GM12878 (cell line): ENCODE measurements at regions of chr1 and their contacts with region 1.

Region 1: DNA sequence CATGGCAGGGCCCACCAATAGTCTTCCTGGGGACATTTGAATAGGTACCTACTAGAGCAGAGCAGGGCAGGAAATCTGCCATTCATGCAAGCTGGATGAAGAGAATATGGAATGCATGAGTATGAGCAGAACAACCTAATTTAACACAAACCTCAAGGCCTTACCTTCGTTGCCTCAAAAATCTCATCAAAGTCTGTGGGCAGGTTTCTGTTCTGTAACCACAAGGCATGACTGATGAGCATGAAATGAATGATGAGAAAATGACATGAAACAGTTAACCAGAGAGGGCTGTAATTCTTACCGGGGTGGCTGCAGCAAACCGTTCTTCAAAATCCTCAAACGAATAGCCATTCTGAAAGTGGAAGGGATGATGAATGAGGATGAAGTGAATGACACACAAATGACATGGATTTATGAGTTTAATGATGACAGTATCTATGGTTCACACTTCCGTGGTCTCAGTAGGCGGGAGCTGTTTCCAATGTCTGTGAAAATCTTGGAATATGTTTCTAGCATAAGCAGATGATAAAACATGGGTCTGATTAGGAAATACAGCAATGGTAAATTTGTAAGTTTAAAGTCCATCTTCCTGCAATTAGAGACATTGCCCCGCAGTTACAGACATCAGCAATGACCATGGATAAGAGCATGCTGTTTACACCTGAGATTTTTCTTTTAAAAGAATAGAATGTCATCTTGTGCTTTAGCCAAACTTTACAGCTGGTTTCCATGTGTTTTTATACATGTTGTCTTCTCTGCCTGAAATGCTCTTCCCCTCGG is 67.6 kb upstream of the C8B start:
- DNase-seq: no peak
- ATAC-seq: peak; percentile 74
- H3K4me3 ChIP-seq: no peak overlapping the region
- H3K27ac ChIP-seq: no peak overlapping the region
- H3K4me1 ChIP-seq: no peaks in the 10 kb centered on the region
- H3K27me3 ChIP-seq: no peaks in the 10 kb centered on the region; a peak in 1 of 4 replicates
- CTCF ChIP-seq: no peak
- EP300 ChIP-seq: no peak
- POLR2A ChIP-seq: no peak
- RAD21 ChIP-seq: no peak

Region 2: GRCh38 chr1:56979986-56980755 is 53.2 kb before region 1 on chr1:
- CTCF ChIA-PET with region 1: no interaction called
- POLR2A ChIA-PET with region 1: no interaction called
- RAD21 ChIA-PET with region 1: no interaction called
- SMC1A ChIA-PET with region 1: interaction called, 3 read pairs
- in situ Hi-C with region 1: no loop called
- intact Hi-C with region 1: loop called (anchors 5 kb)
- DNase-seq: no peak
- ATAC-seq: no peak
- H3K4me3 ChIP-seq: no peak overlapping the region
- H3K27ac ChIP-seq: no peak overlapping the region
- H3K4me1 ChIP-seq: no peaks in the 10 kb centered on the region
- H3K27me3 ChIP-seq: peaks cover 0 to 3% of the 10 kb centered on the region in 2 experiments; a peak in 2 of 4 replicates
- CTCF ChIP-seq: no peak
- EP300 ChIP-seq: no peak
- POLR2A ChIP-seq: no peak
- RAD21 ChIP-seq: no peak

Region 3: DNA sequence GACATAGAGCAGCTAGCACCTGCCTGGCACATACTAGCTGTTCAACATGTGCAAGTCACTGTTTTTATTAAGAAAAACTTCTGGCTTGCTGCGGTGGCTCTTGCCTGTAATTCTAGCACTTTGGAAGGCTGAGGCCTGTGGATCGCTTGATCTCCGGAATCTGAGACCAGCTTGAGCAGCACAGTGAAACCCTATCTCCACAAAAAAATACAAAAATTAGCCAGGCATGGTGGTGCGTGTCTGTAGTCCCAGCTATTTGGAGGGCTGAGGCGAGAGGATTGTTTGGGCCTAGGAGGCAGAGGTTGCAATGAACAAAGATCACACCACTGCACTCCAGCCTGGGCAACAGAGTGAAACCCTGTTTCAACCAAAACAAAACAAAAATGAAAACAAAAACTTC is 39.9 kb before region 1 on chr1:
- CTCF ChIA-PET with region 1: no interaction called
- POLR2A ChIA-PET with region 1: no interaction called
- RAD21 ChIA-PET with region 1: no interaction called
- SMC1A ChIA-PET with region 1: no interaction called
- in situ Hi-C with region 1: no loop called
- intact Hi-C with region 1: no loop called
- DNase-seq: no peak
- ATAC-seq: no peak
- H3K4me3 ChIP-seq: no peak overlapping the region
- H3K27ac ChIP-seq: no peak overlapping the region
- H3K4me1 ChIP-seq: no peaks in the 10 kb centered on the region
- H3K27me3 ChIP-seq: peaks cover 2% of the 10 kb centered on the region in 2 experiments; a peak in 2 of 4 replicates
- CTCF ChIP-seq: no peak
- EP300 ChIP-seq: no peak
- POLR2A ChIP-seq: no peak
- RAD21 ChIP-seq: no peak

Region 4: GRCh38 chr1:57112148-57112547 is 78.7 kb after region 1 on chr1:
- CTCF ChIA-PET with region 1: no interaction called
- POLR2A ChIA-PET with region 1: no interaction called
- RAD21 ChIA-PET with region 1: no interaction called
- SMC1A ChIA-PET with region 1: no interaction called
- in situ Hi-C with region 1: no loop called
- intact Hi-C with region 1: no loop called
- DNase-seq: no peak
- ATAC-seq: no peak
- H3K4me3 ChIP-seq: no peak overlapping the region
- H3K27ac ChIP-seq: no peak overlapping the region
- H3K4me1 ChIP-seq: no peaks in the 10 kb centered on the region
- H3K27me3 ChIP-seq: no peaks in the 10 kb centered on the region
- CTCF ChIP-seq: no peak
- EP300 ChIP-seq: no peak
- POLR2A ChIP-seq: no peak
- RAD21 ChIP-seq: no peak